ENCODE measurements at regions of chr3 and their contacts with region 1.

Region 1: GRCh38 chr3:113745273-113746068 is 578 bp downstream of the NAA50 start:
- DNase-seq: peak; percentile 88
- H3K4me3 ChIP-seq: peak overlapping the region; percentile 75 to 84 (median 78)
- H3K27ac ChIP-seq: peak overlapping the region; percentile 94 to 98 (median 97)
- H3K4me1 ChIP-seq: peaks cover 0 to 67% (median 34%) of the 10 kb centered on the region in 4 donors
- H3K27me3 ChIP-seq: no peaks in the 10 kb centered on the region
- CTCF ChIP-seq: peak; percentile 52 to 65 (median 59)
- EP300 ChIP-seq: no peak
- POLR2A ChIP-seq: peak in 1 of 2 donors; percentile 6

Region 2: DNA sequence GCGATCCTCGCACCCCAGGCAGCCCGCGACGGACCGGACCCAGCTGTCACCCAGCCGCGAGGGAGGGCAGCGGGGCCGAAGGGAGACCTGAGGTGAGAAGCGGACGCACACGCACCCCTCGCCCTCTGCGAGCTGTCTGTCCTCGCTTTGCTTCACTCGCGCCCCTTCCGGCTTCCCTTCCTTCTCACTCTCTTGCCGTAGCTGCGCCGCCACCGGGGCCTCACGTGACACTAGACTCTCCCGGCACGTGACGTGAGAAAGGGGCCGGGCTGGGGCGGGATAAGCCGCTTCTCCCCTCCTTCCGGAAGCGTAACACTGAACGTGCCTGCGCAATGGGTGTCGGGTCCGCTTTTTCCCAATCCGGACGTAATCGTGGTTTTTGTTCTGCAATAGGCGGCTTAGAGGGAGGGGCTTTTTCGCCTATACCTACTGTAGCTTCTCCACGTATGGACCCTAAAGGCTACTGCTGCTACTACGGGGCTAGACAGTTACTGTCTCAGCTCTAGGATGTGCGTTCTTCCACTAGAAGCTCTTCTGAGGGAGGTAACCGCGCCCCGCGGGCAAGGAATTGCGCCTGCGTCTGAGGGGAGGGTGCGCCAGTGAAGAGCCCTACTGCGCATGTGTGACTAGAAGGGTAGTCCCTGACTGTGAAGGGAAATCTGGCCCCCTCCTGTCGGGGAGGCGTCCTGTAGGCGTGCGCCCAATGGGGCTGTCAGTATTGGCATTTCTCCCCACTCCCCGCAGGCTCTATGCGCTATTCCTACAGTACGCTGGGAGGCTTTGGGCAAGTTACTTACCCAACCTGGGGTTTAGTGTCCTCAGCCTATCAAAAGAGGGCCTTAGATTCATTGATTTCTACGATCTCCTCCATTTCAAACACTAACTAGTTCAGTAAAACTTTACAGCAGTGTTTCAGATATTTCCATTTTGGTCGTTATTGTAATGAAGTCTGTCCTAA is 1183.5 kb before region 1 on chr3 and contains the starts of genes ATG3 and SLC35A5:
- intact Hi-C with region 1: loop called (anchors 5 kb)
- DNase-seq: peak; percentile 99
- H3K4me3 ChIP-seq: peak within 1 kb of the TSS; percentile 68 to 98 (median 88)
- H3K27ac ChIP-seq: peak within 1 kb of the TSS; percentile 94 to 98 (median 97)
- H3K4me1 ChIP-seq: peaks cover 0 to 37% (median 27%) of the 10 kb centered on the region in 4 donors
- H3K27me3 ChIP-seq: no peaks in the 10 kb centered on the region
- CTCF ChIP-seq: no peak
- EP300 ChIP-seq: peak in 1 of 4 donors; percentile 70
- POLR2A ChIP-seq: peak; percentile 67 to 79
- total RNA-seq, gene ATG3: 28.0 to 49.5 (median 41.1) TPM
- total RNA-seq, gene SLC35A5: 16.1 to 32.1 (median 17.5) TPM

Region 3: DNA sequence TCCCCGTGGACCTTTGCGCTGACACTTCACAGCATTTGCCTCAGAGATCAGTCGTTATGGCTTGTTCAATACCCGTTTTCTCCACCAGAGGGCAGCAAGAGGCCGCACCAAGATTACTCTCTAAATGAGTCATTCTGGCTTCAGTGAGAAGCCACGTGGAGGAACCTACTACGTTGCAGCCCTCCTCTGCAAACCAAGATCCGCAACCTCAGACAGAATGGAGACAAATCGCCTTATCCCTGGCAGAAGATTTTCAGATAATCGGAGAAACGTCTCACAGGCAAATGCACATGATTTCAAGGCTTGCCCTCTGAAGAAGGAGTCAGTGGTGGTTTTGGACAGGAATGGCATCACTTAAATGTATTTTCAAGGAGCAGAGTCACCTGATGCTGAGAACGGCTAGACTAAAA is 694.2 kb before region 1 on chr3:
- intact Hi-C with region 1: loop called (anchors 5 kb)
- DNase-seq: peak; percentile 93
- H3K4me3 ChIP-seq: peak overlapping the region in 2 of 4 donors; percentile 7 to 17
- H3K27ac ChIP-seq: peak overlapping the region; percentile 71 to 75 (median 74)
- H3K4me1 ChIP-seq: peaks cover 0 to 23% (median 16%) of the 10 kb centered on the region in 4 donors
- H3K27me3 ChIP-seq: no peaks in the 10 kb centered on the region
- CTCF ChIP-seq: peak; percentile 83 to 97 (median 93)
- EP300 ChIP-seq: no peak
- POLR2A ChIP-seq: no peak

Region 4: GRCh38 chr3:113468539-113468938 is 276.9 kb before region 1 on chr3:
- intact Hi-C with region 1: no loop called
- DNase-seq: no peak
- H3K4me3 ChIP-seq: no peak overlapping the region
- H3K27ac ChIP-seq: no peak overlapping the region
- H3K4me1 ChIP-seq: no peaks in the 10 kb centered on the region
- H3K27me3 ChIP-seq: no peaks in the 10 kb centered on the region
- CTCF ChIP-seq: no peak
- EP300 ChIP-seq: no peak
- POLR2A ChIP-seq: no peak

Region 5: GRCh38 chr3:113495035-113495434 is 250.4 kb before region 1 on chr3:
- intact Hi-C with region 1: loop called (anchors 5 kb)
- DNase-seq: no peak
- H3K4me3 ChIP-seq: no peak overlapping the region
- H3K27ac ChIP-seq: no peak overlapping the region
- H3K4me1 ChIP-seq: no peaks in the 10 kb centered on the region
- H3K27me3 ChIP-seq: no peaks in the 10 kb centered on the region
- CTCF ChIP-seq: peak in 3 of 4 experiments; percentile 20 to 39 (median 37)
- EP300 ChIP-seq: no peak
- POLR2A ChIP-seq: no peak

Region 6: DNA sequence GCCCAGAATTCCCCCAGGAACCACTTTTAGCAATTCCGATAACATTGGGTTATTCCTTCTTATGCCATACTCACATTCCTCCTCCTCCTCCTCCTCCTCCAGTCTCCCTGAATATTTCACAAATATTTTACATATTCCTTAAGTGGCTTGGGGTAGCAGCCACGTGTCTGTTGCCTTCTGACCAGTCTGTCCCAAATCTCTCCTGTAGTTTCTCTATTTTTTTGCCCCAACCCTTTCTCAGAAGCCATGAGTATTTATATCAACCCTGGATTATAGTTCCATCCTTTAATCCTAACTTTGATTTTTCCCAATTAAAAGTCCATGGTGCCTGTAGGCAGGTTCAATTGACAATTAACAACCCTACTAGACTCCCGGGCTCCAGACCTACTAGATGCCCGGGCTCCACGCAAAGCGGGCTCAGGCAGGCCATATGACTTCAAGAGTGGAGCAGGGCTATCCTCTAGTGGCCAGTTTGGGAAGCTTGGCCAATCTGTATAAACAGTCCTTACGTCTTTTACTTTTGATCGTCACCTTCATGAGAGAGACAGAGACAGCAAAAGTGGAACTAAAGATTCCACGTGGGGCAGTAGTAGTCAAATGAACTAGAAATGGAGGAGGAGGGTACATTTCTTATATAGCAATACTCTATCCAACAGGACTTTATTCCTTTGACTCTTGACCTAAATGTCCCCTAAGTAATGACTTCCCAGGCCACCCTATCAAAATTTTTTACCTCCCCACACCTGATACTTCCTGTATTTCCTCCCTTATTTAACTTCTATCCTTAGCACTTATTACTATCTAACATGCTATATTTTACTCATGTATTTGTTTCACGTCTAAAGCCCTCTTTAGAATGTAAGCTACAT is 118.7 kb before region 1 on chr3:
- intact Hi-C with region 1: loop called (anchors 5 kb)
- DNase-seq: peak; percentile 82
- H3K4me3 ChIP-seq: peak overlapping the region in 2 of 4 donors; percentile 4 to 16
- H3K27ac ChIP-seq: peak overlapping the region in 1 of 4 donors; percentile 4
- H3K4me1 ChIP-seq: peaks cover 0 to 45% (median 24%) of the 10 kb centered on the region in 4 donors
- H3K27me3 ChIP-seq: no peaks in the 10 kb centered on the region
- CTCF ChIP-seq: peak; percentile 84 to 90 (median 88)
- EP300 ChIP-seq: no peak
- POLR2A ChIP-seq: no peak

Measured in sigmoid colon (tissue), 7 donors.